PC-3 (cell line): ENCODE measurements at regions of chr20 and their contacts with region 1.

Region 1: GRCh38 chr20:47464380-47465101 is 37.1 kb upstream of the NCOA3 start:
- DNase-seq: peak; percentile 100
- ATAC-seq: peak; percentile 98
- H3K4me3 ChIP-seq: no peak overlapping the region; the same call in 1 of the 2 replicates
- H3K27ac ChIP-seq: peak overlapping the region; percentile 78
- H3K4me1 ChIP-seq: peaks cover 22% of the 10 kb centered on the region
- H3K27me3 ChIP-seq: no peaks in the 10 kb centered on the region
- CTCF ChIP-seq: peak; percentile 71

Region 2: GRCh38 chr20:47205577-47206498 is 258.7 kb before region 1 on chr20:
- CTCF ChIA-PET with region 1: no interaction called
- POLR2A ChIA-PET with region 1: no interaction called
- intact Hi-C with region 1: loop called (anchors 2 kb)
- DNase-seq: peak; percentile 97
- ATAC-seq: peak; percentile 82
- H3K4me3 ChIP-seq: no peak overlapping the region; the same call in 1 of the 2 replicates
- H3K27ac ChIP-seq: peak overlapping the region; percentile 96
- H3K4me1 ChIP-seq: peaks cover 46% of the 10 kb centered on the region
- H3K27me3 ChIP-seq: no peaks in the 10 kb centered on the region
- CTCF ChIP-seq: peak; percentile 92